CD4-positive, alpha-beta memory T cell (primary cell): ENCODE measurements at regions of chr9 and their contacts with region 1.

Region 1: DNA sequence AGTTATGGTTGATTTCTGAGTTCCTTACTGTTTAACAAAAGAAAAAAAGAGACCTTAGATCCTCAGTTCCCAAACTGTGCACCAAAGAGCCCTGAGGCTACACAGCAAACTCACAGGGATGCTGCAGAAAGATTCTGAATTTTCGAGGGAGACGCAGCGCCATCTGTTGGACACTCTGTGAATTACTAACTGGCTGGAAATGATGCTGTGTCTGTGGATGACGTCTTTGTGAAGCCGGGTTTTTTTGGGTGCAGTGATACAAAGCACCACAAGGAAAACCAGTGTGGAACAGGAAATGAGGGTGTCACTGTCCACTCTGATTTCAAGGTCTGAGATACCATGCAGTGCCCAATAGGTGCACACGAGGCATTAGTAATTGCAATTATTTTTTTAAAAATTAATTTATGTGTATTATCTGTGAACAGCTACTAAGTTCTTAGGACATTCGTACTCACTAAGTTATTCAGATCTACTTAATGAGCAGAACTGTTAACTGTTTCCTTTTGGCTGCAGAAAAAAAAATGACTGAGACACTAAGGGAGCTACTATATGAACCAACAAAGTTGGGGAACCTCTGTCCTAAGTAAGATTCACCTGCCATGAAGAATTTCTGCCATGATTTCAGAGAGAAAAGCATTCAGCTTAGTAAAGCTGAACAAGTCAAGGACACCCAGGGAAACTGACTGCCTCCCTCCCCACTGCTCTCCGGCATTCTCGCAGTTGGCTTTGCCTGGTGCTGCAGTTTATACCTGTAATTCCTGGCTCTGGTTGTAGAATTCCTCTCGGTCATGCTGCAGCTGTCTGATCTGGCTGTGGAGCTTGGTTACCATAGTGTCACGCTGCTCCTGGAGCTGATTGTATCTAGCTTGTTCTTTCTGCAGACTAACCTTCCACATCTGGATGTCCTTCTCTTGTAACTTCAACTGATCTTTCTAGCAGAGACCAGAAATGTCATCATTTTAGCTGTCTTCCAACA is 23.4 kb downstream of the SPACA9 start:
- DNase-seq: peak; percentile 77 to 82 (median 81)
- H3K4me3 ChIP-seq: no peak overlapping the region
- H3K4me3 Mint-ChIP-seq: no peak overlapping the region
- H3K27ac ChIP-seq: peak overlapping the region; percentile 12
- H3K27ac Mint-ChIP-seq: peak overlapping the region; percentile 3 to 87 (median 65)
- H3K4me1 ChIP-seq: no peaks in the 10 kb centered on the region
- H3K4me1 Mint-ChIP-seq: peaks cover 4 to 14% (median 7%) of the 10 kb centered on the region in 4 donors
- H3K27me3 ChIP-seq: no peaks in the 10 kb centered on the region
- H3K27me3 Mint-ChIP-seq: no peaks in the 10 kb centered on the region

Region 2: GRCh38 chr9:132485393-132485792 is 416.8 kb before region 1 on chr9:
- CTCF ChIA-PET with region 1: no interaction called
- POLR2A ChIA-PET with region 1: no interaction called
- intact Hi-C with region 1: no loop called
- DNase-seq: no peak
- H3K4me3 ChIP-seq: no peak overlapping the region
- H3K4me3 Mint-ChIP-seq: no peak overlapping the region
- H3K27ac ChIP-seq: no peak overlapping the region
- H3K27ac Mint-ChIP-seq: peak overlapping the region in 1 of 7 donors; percentile 4
- H3K4me1 ChIP-seq: peaks cover 27% of the 10 kb centered on the region
- H3K4me1 Mint-ChIP-seq: peaks cover 18 to 32% (median 25%) of the 10 kb centered on the region in 4 donors
- H3K27me3 ChIP-seq: no peaks in the 10 kb centered on the region
- H3K27me3 Mint-ChIP-seq: peaks cover 5 to 8% of the 10 kb centered on the region in 2 donors

Region 3: DNA sequence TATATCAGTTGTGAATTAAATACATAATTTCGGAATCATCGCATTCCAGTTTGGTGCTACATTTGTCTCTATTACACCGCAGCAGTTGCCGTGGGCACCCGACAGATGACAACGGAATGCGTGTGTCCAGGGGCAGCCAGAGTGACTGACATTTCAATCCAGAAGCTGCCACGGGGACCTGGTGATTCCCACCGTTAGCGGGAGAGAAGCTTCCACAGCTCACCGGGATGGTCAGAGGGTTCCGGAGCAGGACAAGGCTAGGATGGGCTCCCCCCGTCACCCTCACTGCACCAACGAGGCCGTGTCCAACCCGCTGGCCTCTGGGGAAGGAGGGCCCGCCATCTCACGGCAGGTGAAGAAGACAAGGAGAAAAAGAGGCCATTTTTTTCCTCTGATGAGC is 145.1 kb before region 1 on chr9:
- CTCF ChIA-PET with region 1: no interaction called
- POLR2A ChIA-PET with region 1: no interaction called
- intact Hi-C with region 1: no loop called
- DNase-seq: no peak
- H3K4me3 ChIP-seq: no peak overlapping the region
- H3K4me3 Mint-ChIP-seq: no peak overlapping the region
- H3K27ac ChIP-seq: no peak overlapping the region
- H3K27ac Mint-ChIP-seq: no peak overlapping the region
- H3K4me1 ChIP-seq: no peaks in the 10 kb centered on the region
- H3K4me1 Mint-ChIP-seq: no peaks in the 10 kb centered on the region
- H3K27me3 ChIP-seq: no peaks in the 10 kb centered on the region
- H3K27me3 Mint-ChIP-seq: peaks cover 12 to 14% of the 10 kb centered on the region in 2 donors

Region 4: DNA sequence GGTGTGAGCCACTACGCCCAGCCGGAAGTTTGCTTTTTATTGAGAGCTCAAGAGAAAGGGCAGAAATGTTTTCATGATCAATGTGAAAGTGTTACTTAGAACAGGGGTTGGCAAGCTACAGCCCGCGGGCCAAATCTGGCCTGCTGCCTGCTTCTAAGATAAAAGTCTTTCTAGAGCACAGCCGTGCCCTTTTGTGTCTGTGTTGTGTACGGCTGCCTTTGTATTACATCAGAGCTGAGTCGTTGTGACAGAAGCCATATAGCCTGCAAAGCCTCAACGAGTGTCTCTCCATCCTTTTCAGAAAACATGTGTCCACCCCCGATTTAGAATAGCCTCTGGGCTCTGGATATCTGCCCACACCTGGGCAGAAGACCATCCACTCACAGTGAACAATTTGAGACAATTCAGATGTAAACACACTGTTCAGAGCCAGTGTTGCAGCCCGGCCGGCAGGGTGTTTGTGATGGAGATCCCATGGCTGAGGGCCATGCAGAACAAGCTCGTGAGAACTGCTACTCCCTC is 52.9 kb before region 1 on chr9:
- CTCF ChIA-PET with region 1: interaction called, 7 read pairs
- POLR2A ChIA-PET with region 1: no interaction called
- intact Hi-C with region 1: loop called (anchors 10 kb)
- DNase-seq: no peak
- H3K4me3 ChIP-seq: no peak overlapping the region
- H3K4me3 Mint-ChIP-seq: peak overlapping the region; percentile 51 to 76 (median 64)
- H3K27ac ChIP-seq: no peak overlapping the region
- H3K27ac Mint-ChIP-seq: peak overlapping the region in 5 of 7 donors; percentile 55 to 81 (median 65)
- H3K4me1 ChIP-seq: no peaks in the 10 kb centered on the region
- H3K4me1 Mint-ChIP-seq: peaks cover 2 to 10% (median 7%) of the 10 kb centered on the region in 4 donors
- H3K27me3 ChIP-seq: no peaks in the 10 kb centered on the region
- H3K27me3 Mint-ChIP-seq: peaks cover 2 to 6% of the 10 kb centered on the region in 2 donors

Region 5: GRCh38 chr9:132919614-132920268 is 17.6 kb after region 1 on chr9:
- CTCF ChIA-PET with region 1: interaction called, 55 read pairs
- POLR2A ChIA-PET with region 1: no interaction called
- intact Hi-C with region 1: no loop called
- DNase-seq: no peak
- H3K4me3 ChIP-seq: no peak overlapping the region
- H3K4me3 Mint-ChIP-seq: no peak overlapping the region
- H3K27ac ChIP-seq: no peak overlapping the region
- H3K27ac Mint-ChIP-seq: peak overlapping the region in 1 of 7 donors; percentile 0
- H3K4me1 ChIP-seq: no peaks in the 10 kb centered on the region
- H3K4me1 Mint-ChIP-seq: no peaks in the 10 kb centered on the region
- H3K27me3 ChIP-seq: no peaks in the 10 kb centered on the region
- H3K27me3 Mint-ChIP-seq: no peaks in the 10 kb centered on the region

Region 6: DNA sequence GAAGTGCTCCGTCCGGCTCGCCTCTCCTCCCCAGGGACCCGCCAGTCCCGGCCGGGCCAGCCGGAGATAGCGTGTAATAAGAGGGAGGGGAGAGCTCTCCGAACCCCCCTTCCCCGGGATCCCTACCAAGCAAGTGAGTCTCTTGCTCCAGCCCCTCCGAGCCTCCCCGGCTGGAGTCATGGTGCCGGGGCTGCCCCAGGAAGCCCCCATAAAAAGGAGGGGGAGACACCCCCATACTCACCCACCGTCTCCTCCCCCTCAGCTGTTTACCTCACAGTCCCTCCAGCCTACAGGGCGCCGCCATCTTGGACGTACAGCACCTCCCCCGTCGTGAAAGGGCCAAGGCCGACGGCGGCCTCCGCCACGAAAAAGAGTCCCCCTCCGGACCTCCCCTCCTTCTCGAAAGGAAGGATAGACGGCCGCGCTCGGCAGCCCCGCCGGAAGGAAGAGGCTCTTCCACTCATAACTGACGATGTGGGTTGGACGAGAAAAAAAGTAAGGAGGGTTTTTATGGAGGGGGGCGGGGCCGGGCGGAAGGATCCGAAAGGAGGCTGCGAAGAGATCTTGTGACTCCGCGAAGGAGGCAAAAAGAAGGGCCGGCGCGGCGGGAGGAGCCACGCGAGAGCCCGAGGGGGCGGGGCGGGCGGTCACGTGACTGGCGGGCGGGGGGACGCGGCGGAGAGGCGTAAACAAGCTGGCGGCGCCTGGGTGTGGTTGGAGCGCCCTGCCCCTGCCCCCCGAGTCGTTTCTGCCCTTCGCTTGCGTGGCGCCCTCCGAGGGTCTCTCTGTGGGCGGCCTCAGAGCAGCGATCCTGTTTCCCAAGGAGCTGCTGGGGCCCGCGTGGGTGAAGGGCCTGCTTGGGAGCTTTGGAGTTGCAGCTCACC is 42.4 kb after region 1 on chr9 and contains the start of gene TSC1:
- CTCF ChIA-PET with region 1: interaction called, 19 read pairs
- POLR2A ChIA-PET with region 1: interaction called, 7 read pairs
- intact Hi-C with region 1: no loop called
- DNase-seq: peak; percentile 96 to 99 (median 97)
- H3K4me3 ChIP-seq: peak within 1 kb of the TSS; percentile 74 to 91
- H3K4me3 Mint-ChIP-seq: peak within 1 kb of the TSS; percentile 94 to 98 (median 96)
- H3K27ac ChIP-seq: peak within 1 kb of the TSS; percentile 90
- H3K27ac Mint-ChIP-seq: peak within 1 kb of the TSS; percentile 99 to 100 (median 100)
- H3K4me1 ChIP-seq: peaks cover 27% of the 10 kb centered on the region
- H3K4me1 Mint-ChIP-seq: peaks cover 11 to 36% (median 22%) of the 10 kb centered on the region in 4 donors
- H3K27me3 ChIP-seq: no peaks in the 10 kb centered on the region
- H3K27me3 Mint-ChIP-seq: peaks cover 0 to 3% of the 10 kb centered on the region in 2 donors
- total RNA-seq, gene TSC1: 72.7 to 76.5 TPM